Caco-2 (cell line): ENCODE measurements at regions of chr7 and their contacts with region 1.

Region 1: GRCh38 chr7:22559829-22560489 is 60.0 kb upstream of the STEAP1B start:
- DNase-seq: peak; percentile 79 to 82
- H3K4me3 ChIP-seq: no peak overlapping the region
- H3K4me3 Mint-ChIP-seq: no peak overlapping the region
- H3K27ac Mint-ChIP-seq: peak overlapping the region; percentile 29
- H3K4me1 ChIP-seq: peaks cover 40% of the 10 kb centered on the region
- H3K4me1 Mint-ChIP-seq: peaks cover 17% of the 10 kb centered on the region
- H3K27me3 ChIP-seq: no peaks in the 10 kb centered on the region
- H3K27me3 Mint-ChIP-seq: no peaks in the 10 kb centered on the region
- CTCF ChIP-seq: peak; percentile 93 to 95

Region 2: GRCh38 chr7:22302951-22303423 is 257.0 kb before region 1 on chr7:
- CTCF ChIA-PET with region 1: no interaction called
- POLR2A ChIA-PET with region 1: no interaction called
- intact Hi-C with region 1: no loop called
- DNase-seq: no peak
- H3K4me3 ChIP-seq: no peak overlapping the region
- H3K4me3 Mint-ChIP-seq: no peak overlapping the region
- H3K27ac Mint-ChIP-seq: no peak overlapping the region
- H3K4me1 ChIP-seq: no peaks in the 10 kb centered on the region
- H3K4me1 Mint-ChIP-seq: no peaks in the 10 kb centered on the region
- H3K27me3 ChIP-seq: no peaks in the 10 kb centered on the region
- H3K27me3 Mint-ChIP-seq: no peaks in the 10 kb centered on the region
- CTCF ChIP-seq: no peak

Region 3: DNA sequence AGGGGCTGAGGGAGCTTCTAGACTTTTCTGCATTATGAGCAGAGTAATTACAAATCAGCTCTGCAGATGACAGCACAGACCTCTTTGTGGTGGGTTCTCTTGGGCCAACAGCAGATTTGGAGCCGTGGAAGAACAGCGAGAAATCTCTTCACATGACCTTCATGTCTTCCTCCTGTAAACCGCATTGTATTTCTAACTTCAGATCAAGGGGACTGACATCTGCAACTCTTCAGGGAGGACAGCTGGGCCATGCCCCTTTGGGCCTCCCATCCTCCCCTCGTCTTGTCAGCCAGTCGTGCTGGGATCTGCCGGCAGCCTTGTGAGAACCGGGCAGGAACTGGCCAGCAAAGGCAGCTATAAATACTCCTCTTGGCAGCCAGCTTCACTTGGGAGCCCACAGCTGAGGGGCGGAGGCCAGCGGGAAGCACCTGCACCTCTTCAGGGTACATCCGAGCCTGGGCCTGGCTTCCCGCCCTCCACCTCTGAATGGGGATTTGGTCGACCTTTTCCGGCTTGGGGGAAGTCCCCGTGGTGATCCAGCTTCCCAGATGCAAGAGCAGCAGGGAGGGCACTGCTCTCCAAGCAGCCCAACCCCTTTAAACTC is 114.7 kb before region 1 on chr7:
- CTCF ChIA-PET with region 1: no interaction called
- POLR2A ChIA-PET with region 1: no interaction called
- intact Hi-C with region 1: no loop called
- DNase-seq: no peak
- H3K4me3 ChIP-seq: no peak overlapping the region
- H3K4me3 Mint-ChIP-seq: no peak overlapping the region
- H3K27ac Mint-ChIP-seq: peak overlapping the region; percentile 53
- H3K4me1 ChIP-seq: peaks cover 10% of the 10 kb centered on the region; the same call in 1 of the 2 replicates
- H3K4me1 Mint-ChIP-seq: peaks cover 14% of the 10 kb centered on the region
- H3K27me3 ChIP-seq: no peaks in the 10 kb centered on the region
- H3K27me3 Mint-ChIP-seq: no peaks in the 10 kb centered on the region
- CTCF ChIP-seq: no peak

Region 4: DNA sequence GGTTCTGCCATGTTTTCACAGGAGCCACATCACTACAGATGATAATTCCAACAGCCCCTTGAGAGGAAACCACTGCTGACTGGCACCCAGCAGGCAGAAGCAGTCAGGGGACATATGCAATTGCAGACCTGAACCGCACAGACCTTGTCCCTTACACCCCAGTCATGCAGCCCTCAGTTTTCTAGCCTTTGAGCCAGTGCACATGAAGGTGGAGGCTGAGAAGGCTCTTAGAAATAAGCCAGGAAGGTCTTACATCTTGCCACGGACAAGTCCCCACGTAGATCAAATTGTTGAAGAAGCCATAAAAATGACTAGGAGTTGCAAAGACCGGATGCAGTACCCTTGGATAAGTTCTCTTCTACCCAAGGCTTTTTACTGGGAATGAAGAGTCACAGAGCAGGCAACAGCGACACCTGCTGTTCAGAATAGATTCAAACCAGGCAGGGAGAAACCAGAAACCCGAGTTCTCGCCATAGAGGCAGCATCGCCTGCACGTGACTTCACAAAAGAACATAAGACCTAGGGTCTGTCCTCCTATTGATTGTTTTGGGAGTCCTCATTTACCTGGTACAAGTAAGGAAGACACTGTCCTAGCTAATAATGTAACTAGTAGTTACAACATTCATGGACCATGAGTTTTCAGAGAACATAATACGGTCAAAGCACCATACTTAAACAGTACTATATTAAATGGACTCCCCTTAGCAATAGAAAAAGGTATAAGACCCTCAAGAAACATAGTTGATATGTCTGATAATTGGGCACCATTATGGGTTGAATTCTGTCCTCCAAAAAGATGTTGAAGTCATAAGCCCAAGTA is 71.1 kb before region 1 on chr7:
- CTCF ChIA-PET with region 1: no interaction called
- POLR2A ChIA-PET with region 1: no interaction called
- intact Hi-C with region 1: no loop called
- DNase-seq: peak; percentile 67 to 80
- H3K4me3 ChIP-seq: no peak overlapping the region
- H3K4me3 Mint-ChIP-seq: no peak overlapping the region
- H3K27ac Mint-ChIP-seq: no peak overlapping the region
- H3K4me1 ChIP-seq: no peaks in the 10 kb centered on the region
- H3K4me1 Mint-ChIP-seq: no peaks in the 10 kb centered on the region
- H3K27me3 ChIP-seq: no peaks in the 10 kb centered on the region
- H3K27me3 Mint-ChIP-seq: no peaks in the 10 kb centered on the region
- CTCF ChIP-seq: peak; percentile 81 to 88

Region 5: DNA sequence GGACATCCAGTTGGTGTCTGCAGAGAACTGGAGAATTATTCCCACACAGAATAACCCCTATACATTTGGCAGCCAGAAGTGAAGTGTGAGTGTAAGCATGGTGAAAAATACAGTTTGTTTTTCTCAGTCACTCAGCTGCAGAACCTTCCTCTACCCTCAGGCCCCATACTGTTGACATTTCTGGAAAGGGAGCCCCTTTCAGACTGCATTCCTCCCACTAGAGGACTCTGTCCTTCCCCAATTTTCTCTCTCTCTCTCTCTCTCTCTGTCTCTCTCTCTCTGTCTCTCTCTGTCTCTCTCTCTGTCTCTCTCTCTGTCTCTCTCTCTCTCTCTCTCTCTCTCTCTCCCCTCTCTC is 26.8 kb after region 1 on chr7:
- CTCF ChIA-PET with region 1: interaction called, 14 read pairs
- POLR2A ChIA-PET with region 1: interaction called, 9 read pairs
- intact Hi-C with region 1: loop called (anchors 1 kb)
- DNase-seq: peak; percentile 59 to 70
- H3K4me3 ChIP-seq: no peak overlapping the region
- H3K4me3 Mint-ChIP-seq: no peak overlapping the region
- H3K27ac Mint-ChIP-seq: peak overlapping the region; percentile 24
- H3K4me1 ChIP-seq: peaks cover 39% of the 10 kb centered on the region
- H3K4me1 Mint-ChIP-seq: peaks cover 32% of the 10 kb centered on the region
- H3K27me3 ChIP-seq: no peaks in the 10 kb centered on the region
- H3K27me3 Mint-ChIP-seq: no peaks in the 10 kb centered on the region
- CTCF ChIP-seq: peak; percentile 55

Region 6: DNA sequence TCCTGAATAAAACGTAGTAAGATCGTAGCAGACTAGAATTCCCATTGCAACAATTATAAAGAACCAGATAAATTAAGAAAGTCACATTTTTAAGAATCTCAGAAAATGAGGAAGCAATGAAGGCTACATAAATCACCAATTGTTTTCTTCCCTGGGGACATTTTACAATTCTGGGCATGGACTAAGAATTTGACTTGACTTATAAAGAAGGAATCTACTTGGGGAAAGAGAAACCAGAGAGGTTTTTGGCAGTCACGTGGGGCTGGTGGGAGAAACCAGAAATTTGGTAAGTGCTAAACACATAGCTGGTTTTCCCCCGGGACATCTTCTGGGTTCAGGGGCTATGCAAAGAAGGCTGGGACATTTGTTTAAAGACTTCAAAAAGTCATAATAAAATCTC is 57.2 kb after region 1 on chr7:
- CTCF ChIA-PET with region 1: no interaction called
- POLR2A ChIA-PET with region 1: no interaction called
- intact Hi-C with region 1: no loop called
- DNase-seq: no peak
- H3K4me3 ChIP-seq: no peak overlapping the region
- H3K4me3 Mint-ChIP-seq: no peak overlapping the region
- H3K27ac Mint-ChIP-seq: no peak overlapping the region
- H3K4me1 ChIP-seq: no peaks in the 10 kb centered on the region
- H3K4me1 Mint-ChIP-seq: peaks cover 6% of the 10 kb centered on the region
- H3K27me3 ChIP-seq: no peaks in the 10 kb centered on the region
- H3K27me3 Mint-ChIP-seq: no peaks in the 10 kb centered on the region
- CTCF ChIP-seq: no peak

Region 7: DNA sequence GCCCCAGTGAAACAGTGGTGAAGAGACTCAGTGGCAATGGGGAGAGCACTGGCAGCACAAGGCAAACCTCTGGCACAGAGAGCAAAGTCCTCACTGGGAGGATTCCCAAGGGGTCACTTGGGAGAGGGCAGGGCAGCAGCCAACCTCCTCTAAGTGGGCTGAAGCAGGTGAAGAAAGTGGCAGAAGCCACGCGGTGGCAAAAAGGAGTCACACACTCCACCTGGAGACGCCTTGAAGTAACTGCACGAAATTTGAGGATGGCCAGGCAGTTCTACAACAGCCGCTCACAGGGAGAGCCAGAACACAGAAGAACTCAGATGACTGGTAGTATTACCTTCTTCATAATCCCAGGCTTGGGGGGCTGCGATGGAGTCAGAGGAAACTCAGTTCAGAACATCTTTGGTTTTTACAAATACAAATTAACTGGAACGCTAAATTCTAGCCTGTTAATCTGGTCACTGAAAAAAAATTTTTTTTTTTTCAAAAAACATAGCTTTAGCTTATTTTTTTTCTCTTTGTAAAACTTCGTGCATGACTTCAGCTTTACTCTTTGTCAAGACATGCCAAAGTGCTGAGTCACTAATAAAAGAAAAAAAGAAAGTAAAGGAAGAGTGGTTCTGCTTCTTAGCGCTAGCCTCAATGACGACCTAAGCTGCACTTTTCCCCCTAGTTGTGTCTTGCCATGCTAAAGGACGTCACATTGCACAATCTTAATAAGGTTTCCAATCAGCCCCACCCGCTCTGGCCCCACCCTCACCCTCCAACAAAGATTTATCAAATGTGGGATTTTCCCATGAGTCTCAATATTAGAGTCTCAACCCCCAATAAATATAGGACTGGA is 166.6 kb after region 1 on chr7:
- CTCF ChIA-PET with region 1: interaction called, 95 read pairs
- POLR2A ChIA-PET with region 1: interaction called, 3 read pairs
- intact Hi-C with region 1: loop called (anchors 1 kb)
- DNase-seq: peak; percentile 73 to 75
- H3K4me3 ChIP-seq: no peak overlapping the region
- H3K4me3 Mint-ChIP-seq: no peak overlapping the region
- H3K27ac Mint-ChIP-seq: peak overlapping the region; percentile 46
- H3K4me1 ChIP-seq: peaks cover 16% of the 10 kb centered on the region
- H3K4me1 Mint-ChIP-seq: peaks cover 13% of the 10 kb centered on the region
- H3K27me3 ChIP-seq: no peaks in the 10 kb centered on the region
- H3K27me3 Mint-ChIP-seq: no peaks in the 10 kb centered on the region
- CTCF ChIP-seq: peak; percentile 69 to 75

Region 8: DNA sequence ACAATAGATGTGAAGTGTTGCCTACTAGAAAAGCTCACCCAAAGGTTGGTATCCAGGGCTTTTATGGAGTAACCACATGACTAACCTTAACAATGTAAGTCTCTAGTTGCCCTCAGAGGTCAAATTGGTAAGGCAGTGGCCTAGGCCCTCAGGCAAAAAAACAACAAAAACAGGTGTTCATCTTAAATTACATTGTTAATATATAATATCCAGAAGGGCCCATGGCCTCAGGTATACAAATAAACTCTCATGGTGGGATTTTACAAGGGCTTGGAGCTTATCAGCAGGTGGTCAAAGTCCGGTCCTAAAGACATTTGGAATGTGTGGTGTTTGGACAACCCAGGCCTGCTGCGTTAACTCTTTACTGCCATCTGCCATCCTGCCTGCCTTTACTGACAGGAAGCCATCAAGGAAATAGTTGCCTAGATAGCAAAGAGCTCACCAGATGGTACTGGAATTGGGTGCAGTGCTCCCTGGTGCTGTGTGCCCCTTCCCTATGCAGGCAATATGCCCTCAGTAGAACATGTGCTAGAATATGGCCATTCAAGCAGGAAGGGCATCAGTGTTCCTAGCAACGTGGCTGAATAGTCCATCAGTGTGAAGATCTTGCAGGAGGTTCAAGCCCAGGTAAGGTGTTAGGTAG is 226.5 kb after region 1 on chr7:
- CTCF ChIA-PET with region 1: interaction called, 7 read pairs
- POLR2A ChIA-PET with region 1: no interaction called
- intact Hi-C with region 1: loop called (anchors 5 kb)
- DNase-seq: peak; percentile 92 to 94
- H3K4me3 ChIP-seq: no peak overlapping the region
- H3K4me3 Mint-ChIP-seq: no peak overlapping the region
- H3K27ac Mint-ChIP-seq: peak overlapping the region; percentile 82
- H3K4me1 ChIP-seq: peaks cover 64% of the 10 kb centered on the region
- H3K4me1 Mint-ChIP-seq: peaks cover 41% of the 10 kb centered on the region
- H3K27me3 ChIP-seq: no peaks in the 10 kb centered on the region
- H3K27me3 Mint-ChIP-seq: no peaks in the 10 kb centered on the region
- CTCF ChIP-seq: no peak

Region 9: GRCh38 chr7:22860784-22861482 is 301.0 kb after region 1 on chr7:
- CTCF ChIA-PET with region 1: interaction called, 5 read pairs
- POLR2A ChIA-PET with region 1: no interaction called
- intact Hi-C with region 1: loop called (anchors 2 kb)
- DNase-seq: peak in 1 of 2 experiments; percentile 44
- H3K4me3 ChIP-seq: no peak overlapping the region
- H3K4me3 Mint-ChIP-seq: no peak overlapping the region
- H3K27ac Mint-ChIP-seq: no peak overlapping the region
- H3K4me1 ChIP-seq: peaks cover 6% of the 10 kb centered on the region
- H3K4me1 Mint-ChIP-seq: peaks cover 7% of the 10 kb centered on the region
- H3K27me3 ChIP-seq: no peaks in the 10 kb centered on the region
- H3K27me3 Mint-ChIP-seq: no peaks in the 10 kb centered on the region
- CTCF ChIP-seq: peak; percentile 56 to 68